ENCODE measurements at regions of chr6 and their contacts with region 1.

Region 1: GRCh38 chr6:119736296-119737021 is 386.9 kb upstream of the MAN1A1 start:
- DNase-seq: no peak
- ATAC-seq: no peak
- H3K4me3 ChIP-seq: no peak overlapping the region
- H3K27ac ChIP-seq: no peak overlapping the region
- H3K4me1 ChIP-seq: no peaks in the 10 kb centered on the region
- H3K27me3 ChIP-seq: no peaks in the 10 kb centered on the region
- CTCF ChIP-seq: no peak
- POLR2A ChIP-seq: no peak

Region 2: DNA sequence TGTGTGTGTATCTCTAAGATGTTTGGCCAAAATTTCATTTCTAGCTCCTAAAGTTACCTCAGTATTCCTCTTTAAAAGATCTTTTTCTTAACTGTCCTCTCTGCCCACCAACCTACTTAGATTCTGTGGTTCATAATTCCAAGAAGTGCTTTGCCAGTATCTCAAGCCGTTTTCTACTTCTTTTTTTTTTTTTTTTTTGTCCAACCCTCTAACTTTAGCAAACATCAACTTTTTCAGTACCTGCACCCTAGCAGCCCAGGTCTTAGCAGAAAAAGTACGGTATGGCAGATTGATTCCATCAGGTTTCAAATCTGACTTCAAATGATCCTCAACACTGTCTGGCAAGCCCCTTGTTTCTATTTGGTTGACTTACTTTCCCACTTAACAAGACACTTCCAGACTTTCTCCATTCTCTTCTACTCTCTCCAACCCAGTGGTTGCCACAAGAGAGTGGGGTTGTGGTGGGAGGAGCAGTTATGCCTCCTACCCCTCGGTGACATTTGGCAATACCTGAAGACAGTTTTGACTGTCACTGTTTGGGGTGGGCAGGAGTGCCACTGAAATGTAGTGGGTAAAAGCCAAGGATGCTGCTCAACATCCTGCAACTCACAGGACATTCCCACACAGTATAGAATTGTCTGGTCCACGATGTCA is 376.1 kb before region 1 on chr6:
- intact Hi-C with region 1: loop called in 2 of 10 experiments (anchors 10 kb)
- DNase-seq: no peak
- ATAC-seq: peak in 2 of 4 donors; percentile 29 to 41
- H3K4me3 ChIP-seq: no peak overlapping the region
- H3K27ac ChIP-seq: no peak overlapping the region
- H3K4me1 ChIP-seq: peaks cover 0 to 21% (median 0%) of the 10 kb centered on the region in 12 donors
- H3K27me3 ChIP-seq: no peaks in the 10 kb centered on the region
- CTCF ChIP-seq: no peak
- POLR2A ChIP-seq: no peak

Measured in heart left ventricle (tissue), 16 donors.